Right ventricle myocardium inferior (tissue), 1 donor: ENCODE measurements at regions of chrX and their contacts with region 1.

Region 1: GRCh38 chrX:48574270-48575266 is at the start of gene RBM3:
- DNase-seq: peak; percentile 95
- ATAC-seq: peak; percentile 99
- total RNA-seq, gene RBM3: 113 TPM

Region 2: GRCh38 chrX:48589482-48590162 is 15.1 kb after region 1 on chrX:
- intact Hi-C with region 1: loop called (anchors 2 kb)
- DNase-seq: no peak
- ATAC-seq: no peak